Aorta (tissue), 5 donors: ENCODE measurements at regions of chr11 and their contacts with region 1.

Region 1: GRCh38 chr11:60913793-60914632 is at the start of gene TMEM109:
- DNase-seq: peak; percentile 92 to 93
- ATAC-seq: peak; percentile 92
- H3K4me3 ChIP-seq: peak within 1 kb of the TSS; percentile 43 to 90
- H3K27ac ChIP-seq: peak within 1 kb of the TSS; percentile 83 to 96
- H3K4me1 ChIP-seq: no peaks in the 10 kb centered on the region
- H3K27me3 ChIP-seq: no peaks in the 10 kb centered on the region
- total RNA-seq, gene TMEM109: 105 to 127 TPM

Region 2: DNA sequence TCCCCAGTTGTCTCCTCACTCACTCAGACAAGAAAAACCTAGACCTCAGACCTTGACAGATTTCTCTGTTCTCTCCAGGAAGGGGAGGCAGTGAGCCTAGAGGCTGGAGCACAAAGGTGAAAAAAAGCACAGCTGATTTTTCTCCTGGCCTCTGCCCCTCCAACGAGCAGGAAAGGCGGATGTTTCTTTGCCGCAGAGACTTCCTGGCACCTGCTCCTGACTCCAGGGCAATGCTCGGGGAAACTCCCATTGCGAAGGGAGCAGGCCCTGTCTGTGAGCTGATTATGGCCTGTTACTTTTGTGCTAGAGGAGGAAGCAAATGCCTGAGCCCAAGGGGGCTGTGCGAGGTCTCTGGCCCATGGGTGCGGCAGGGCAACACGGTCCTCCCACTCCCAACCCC is 103.4 kb before region 1 on chr11:
- intact Hi-C with region 1: no loop called
- DNase-seq: no peak
- ATAC-seq: no peak
- H3K4me3 ChIP-seq: no peak overlapping the region
- H3K27ac ChIP-seq: no peak overlapping the region
- H3K4me1 ChIP-seq: no peaks in the 10 kb centered on the region
- H3K27me3 ChIP-seq: no peaks in the 10 kb centered on the region

Region 3: DNA sequence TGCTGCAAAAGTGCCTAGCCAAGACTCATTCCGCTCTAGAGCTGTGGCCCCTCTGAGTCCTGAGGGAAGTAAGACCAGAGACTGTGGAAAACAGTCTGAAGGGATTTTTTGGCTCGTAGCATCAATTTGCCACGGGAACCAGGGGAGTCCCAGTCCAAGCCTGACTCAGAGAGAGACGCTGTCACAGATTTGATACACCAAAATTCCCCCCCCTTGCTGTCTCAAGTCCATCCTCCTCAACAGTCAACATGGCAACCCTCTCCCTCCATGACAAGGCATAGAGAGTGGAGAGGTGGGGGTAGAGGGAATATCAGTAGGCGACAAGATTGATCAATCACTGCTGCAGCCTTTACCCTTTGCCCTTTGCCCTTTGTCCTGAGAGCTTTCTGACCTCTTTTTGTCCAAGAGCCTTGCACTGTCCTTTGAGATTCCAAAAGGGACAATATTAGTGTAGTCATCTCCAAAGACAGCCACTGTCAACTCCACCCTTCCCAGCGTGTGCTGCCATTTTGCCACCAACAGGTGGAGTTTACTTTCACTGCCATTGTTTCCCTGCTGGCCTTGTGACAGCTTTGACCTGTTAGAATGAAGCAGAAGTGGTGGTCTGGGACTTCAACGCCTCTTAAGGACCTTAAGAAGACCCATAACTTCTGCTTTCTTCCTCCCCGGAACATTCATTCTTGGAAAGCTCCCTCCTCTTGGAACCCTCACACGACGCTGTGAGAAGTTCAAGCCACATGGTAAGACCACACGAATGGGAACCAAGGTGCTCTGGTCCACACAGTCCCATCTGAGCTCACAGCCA is 30.7 kb after region 1 on chr11:
- intact Hi-C with region 1: loop called in 1 of 2 experiments (anchors 5 kb)
- DNase-seq: peak; percentile 20 to 33
- ATAC-seq: no peak
- H3K4me3 ChIP-seq: no peak overlapping the region
- H3K27ac ChIP-seq: no peak overlapping the region
- H3K4me1 ChIP-seq: no peaks in the 10 kb centered on the region
- H3K27me3 ChIP-seq: no peaks in the 10 kb centered on the region

Region 4: DNA sequence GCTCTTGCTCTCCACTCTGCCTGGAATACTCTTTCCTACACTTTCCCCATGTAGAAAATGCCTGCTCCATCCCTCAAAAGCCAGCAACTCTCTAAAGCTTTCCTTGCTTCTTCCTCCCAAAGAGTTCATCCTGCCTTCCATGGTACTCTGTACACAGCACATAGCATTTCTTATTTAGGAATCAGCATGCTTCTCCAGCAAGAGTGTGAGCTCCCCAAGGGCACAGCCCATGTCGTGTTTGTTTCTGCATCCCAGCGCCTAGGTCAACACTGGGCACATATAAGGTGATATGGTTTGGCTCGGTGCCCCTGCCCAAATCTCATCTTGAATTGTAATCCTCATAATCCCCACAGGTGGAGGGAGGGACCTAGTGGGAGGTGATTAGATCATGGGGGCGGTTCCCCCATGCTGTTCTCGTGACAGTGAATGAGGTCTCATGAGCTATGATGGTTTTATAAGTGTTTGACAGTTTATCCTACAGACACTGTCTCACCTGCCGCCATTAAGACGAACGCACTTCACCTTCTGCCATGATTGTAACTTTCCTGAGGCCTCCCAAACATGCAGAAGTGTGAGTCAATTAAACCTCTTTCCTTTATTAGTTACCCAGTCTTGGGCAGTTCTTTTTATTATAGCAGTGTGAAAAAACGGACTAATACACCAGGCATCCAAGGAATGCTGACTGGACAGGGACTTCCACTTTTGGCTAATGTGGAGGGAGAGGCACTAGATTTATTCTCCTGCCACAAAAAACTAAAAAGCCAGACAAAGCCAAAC is 239.0 kb after region 1 on chr11:
- intact Hi-C with region 1: loop called in 1 of 2 experiments (anchors 10 kb)
- DNase-seq: peak; percentile 48 to 62
- ATAC-seq: peak; percentile 66
- H3K4me3 ChIP-seq: no peak overlapping the region
- H3K27ac ChIP-seq: peak overlapping the region; percentile 72 to 99
- H3K4me1 ChIP-seq: peaks cover 0 to 5% of the 10 kb centered on the region in 2 donors
- H3K27me3 ChIP-seq: no peaks in the 10 kb centered on the region

Region 5: DNA sequence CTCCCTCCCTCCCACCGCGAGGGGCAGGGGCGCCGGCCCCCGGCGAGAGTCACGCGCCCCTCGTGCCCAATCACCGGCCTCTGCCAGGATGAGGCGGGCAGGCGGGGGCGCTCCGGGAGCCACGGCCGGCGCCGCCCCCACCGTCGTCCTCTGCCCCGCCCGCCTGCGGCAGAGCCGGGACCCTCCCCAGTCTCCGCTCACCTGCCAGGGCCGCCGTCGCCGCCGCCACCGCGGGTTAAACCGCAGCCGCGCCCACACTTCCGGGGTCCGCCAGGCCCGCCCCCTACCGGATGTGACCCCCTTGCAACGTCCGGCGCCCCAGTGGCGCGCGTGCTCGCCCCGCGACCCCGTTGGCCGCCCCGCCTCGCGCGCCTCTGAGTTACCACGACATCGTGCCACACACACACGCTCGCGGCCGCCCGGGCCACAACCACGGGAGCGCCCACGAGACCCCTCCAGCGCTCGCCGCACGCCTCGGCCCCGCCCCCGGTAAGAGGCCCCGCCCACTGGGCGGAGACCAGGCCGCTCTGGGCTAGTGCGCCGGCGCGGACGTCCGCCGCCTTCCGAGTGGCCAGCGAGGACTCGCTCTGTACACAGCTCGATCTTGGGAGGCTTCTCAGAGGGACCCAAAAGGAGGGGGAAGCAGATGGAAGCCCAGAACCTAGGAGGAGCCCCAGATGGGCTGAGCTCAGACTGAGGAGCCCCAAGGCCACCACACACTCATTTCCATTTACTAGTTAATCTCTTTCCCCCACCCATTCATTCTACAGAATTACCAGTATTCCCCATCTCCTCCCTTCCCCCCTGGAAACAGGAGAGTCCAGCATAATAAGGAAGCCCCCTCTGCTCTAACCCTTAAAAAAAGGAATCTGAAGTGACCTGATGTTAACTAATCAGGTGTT is 247.4 kb after region 1 on chr11 and contains the start of gene VPS37C:
- intact Hi-C with region 1: loop called (anchors 10 kb)
- DNase-seq: peak; percentile 94 to 97
- ATAC-seq: peak; percentile 97
- H3K4me3 ChIP-seq: peak within 1 kb of the TSS; percentile 65 to 74
- H3K27ac ChIP-seq: peak within 1 kb of the TSS; percentile 74 to 79
- H3K4me1 ChIP-seq: peaks cover 0 to 6% of the 10 kb centered on the region in 2 donors
- H3K27me3 ChIP-seq: no peaks in the 10 kb centered on the region
- total RNA-seq, gene VPS37C: 29.8 to 39.9 TPM